ENCODE measurements at regions of chr7 and their contacts with region 1.

Region 1: GRCh38 chr7:148787571-148788295 is 89.0 kb downstream of the CUL1 start:
- DNase-seq: no peak
- ATAC-seq: no peak
- H3K4me3 ChIP-seq: no peak overlapping the region
- H3K27ac ChIP-seq: no peak overlapping the region
- H3K4me1 ChIP-seq: peaks cover 0 to 2% of the 10 kb centered on the region in 2 experiments; a peak in 3 of 5 replicates
- H3K27me3 ChIP-seq: no peaks in the 10 kb centered on the region
- CTCF ChIP-seq: no peak
- EP300 ChIP-seq: no peak
- POLR2A ChIP-seq: no peak
- RAD21 ChIP-seq: no peak

Region 2: DNA sequence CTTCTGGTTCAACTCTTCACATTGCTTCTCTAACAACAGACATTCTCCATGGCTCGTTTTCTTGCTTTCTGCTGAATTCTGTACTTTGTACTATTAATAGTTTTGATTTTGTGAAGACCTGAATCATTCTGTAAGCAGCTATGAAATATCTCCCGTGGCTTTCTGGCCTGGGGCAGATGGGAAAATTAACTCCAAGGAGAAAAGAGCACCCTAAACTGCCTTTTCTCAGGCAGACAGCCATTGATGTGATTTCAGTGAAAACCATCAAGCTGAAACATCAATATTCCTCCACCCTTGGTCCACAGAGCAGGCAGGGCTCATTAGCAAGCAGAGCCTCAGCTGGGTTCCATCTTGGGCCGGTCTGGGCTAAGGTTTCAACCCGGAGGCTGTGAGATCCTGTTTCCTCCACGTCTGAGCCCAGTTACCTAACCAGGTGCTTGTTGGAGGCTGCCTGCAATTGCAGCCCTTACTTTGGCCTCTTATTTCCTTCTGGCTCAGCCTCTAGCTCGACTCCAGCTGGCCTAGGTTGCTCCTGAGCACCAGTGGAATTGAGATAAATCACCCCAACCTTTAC is 117.4 kb after region 1 on chr7:
- CTCF ChIA-PET with region 1: no interaction called
- POLR2A ChIA-PET with region 1: no interaction called
- in situ Hi-C with region 1: no loop called
- intact Hi-C with region 1: no loop called
- DNase-seq: no peak
- ATAC-seq: peak; percentile 30
- H3K4me3 ChIP-seq: no peak overlapping the region
- H3K27ac ChIP-seq: no peak overlapping the region
- H3K4me1 ChIP-seq: no peaks in the 10 kb centered on the region; a peak in 2 of 5 replicates
- H3K27me3 ChIP-seq: peaks cover 17 to 32% of the 10 kb centered on the region in 2 experiments
- CTCF ChIP-seq: no peak
- EP300 ChIP-seq: no peak
- POLR2A ChIP-seq: no peak
- RAD21 ChIP-seq: no peak

Region 3: DNA sequence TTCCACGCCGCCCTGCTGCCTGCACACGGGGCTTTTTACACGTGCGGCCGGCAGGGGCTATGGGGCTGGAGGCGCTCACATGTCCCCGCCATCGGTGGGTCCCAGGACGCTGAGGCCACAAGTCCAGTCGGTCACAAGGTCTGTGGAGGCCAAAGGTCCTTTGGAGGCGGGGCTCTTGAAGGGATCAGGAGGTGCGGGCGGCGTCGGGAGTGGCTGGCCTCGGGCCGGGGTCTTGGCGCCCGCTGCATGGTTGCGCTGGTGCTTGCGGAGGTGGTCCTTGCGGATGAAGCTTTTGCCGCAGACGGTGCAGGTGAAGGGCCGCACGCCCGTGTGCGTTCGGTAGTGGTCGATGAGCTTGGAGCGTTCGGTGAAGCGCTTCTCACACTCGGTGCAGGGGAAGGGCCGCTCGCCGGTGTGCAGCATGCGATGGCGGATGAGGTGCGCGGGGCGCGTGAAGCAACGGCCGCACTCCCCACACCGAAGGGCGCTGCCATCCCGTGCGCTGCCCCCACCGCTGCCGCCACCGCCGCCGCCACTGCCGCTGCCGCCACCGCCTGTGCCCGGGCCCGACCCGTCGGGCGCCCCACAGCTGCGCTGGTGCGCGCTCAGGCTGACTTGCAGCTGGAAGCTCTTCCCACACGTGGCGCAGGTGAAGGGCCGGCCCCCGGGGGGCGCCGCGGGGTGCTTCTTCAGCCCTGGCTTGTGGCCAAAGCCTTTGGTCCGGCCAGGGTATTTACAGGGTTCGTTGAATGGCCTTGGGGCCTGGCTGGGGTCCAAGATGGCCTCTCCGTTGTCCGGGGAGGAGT is 686.8 kb after region 1 on chr7:
- CTCF ChIA-PET with region 1: no interaction called
- POLR2A ChIA-PET with region 1: no interaction called
- in situ Hi-C with region 1: no loop called
- intact Hi-C with region 1: loop called (anchors 5 kb)
- DNase-seq: no peak
- ATAC-seq: no peak
- H3K4me3 ChIP-seq: no peak overlapping the region
- H3K27ac ChIP-seq: no peak overlapping the region
- H3K4me1 ChIP-seq: no peaks in the 10 kb centered on the region; a peak in 1 of 5 replicates
- H3K27me3 ChIP-seq: no peaks in the 10 kb centered on the region
- CTCF ChIP-seq: 0 out of 6 replicates have a peak, but pooled peaks of 2 of the 3 experiments have one; percentile 16 to 19
- EP300 ChIP-seq: no peak
- POLR2A ChIP-seq: no peak
- RAD21 ChIP-seq: no peak

Measured in K562 (cell line).